ENCODE measurements at regions of chr1 and their contacts with region 1.

Region 1: GRCh38 chr1:153352523-153352922 is 3.9 kb upstream of the PGLYRP4 start:
- DNase-seq: peak; percentile 87
- H3K4me3 Mint-ChIP-seq: no peak overlapping the region
- H3K27ac Mint-ChIP-seq: no peak overlapping the region
- H3K4me1 Mint-ChIP-seq: peaks cover 26% of the 10 kb centered on the region
- H3K27me3 Mint-ChIP-seq: peaks cover 40% of the 10 kb centered on the region
- CTCF ChIP-seq: peak; percentile 99

Region 2: DNA sequence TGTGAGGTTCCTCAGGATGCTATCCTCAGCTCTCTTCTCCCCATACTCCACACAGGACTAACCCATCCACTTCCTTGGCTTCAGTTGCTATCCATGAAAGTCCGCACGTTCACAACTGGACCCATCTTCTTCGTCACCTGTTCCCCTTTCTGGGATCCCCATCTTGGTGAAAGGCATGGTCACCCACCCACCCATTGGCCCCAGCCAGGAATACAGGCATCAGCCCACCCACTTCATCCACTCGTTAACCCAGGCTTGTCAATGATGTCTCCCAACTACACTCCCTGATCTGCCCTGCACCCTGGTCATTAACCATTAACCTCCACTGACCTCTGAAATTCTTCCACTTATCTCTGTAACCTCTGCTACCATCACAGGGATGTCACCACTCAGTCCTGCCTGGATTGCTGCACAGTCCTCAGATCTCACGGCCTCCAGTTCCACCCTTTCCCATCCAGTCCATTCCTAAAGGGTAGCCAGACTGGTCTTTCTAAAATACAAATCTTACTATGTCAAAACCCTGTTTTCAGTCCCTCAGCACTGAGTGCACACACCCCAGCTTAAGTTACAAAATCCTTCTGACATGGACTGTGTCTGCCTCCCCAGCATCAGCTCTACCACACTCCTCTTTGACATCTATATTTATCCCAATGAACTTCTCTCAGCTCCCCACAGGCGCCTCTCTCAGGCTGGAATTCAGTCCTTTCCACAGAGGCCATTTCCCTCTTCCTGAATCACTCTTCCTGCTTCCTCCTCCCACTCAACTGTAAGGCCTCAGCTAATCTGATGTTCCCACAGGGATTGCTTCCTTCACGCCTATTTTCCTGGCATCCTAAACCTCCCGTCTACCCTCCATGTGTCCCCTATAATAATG is 14.3 kb before region 1 on chr1:
- CTCF ChIA-PET with region 1: interaction called, 46 read pairs
- POLR2A ChIA-PET with region 1: interaction called, 5 read pairs
- intact Hi-C with region 1: no loop called
- DNase-seq: no peak
- H3K4me3 Mint-ChIP-seq: no peak overlapping the region
- H3K27ac Mint-ChIP-seq: no peak overlapping the region
- H3K4me1 Mint-ChIP-seq: no peaks in the 10 kb centered on the region
- H3K27me3 Mint-ChIP-seq: peaks cover 73% of the 10 kb centered on the region
- CTCF ChIP-seq: no peak

Region 3: DNA sequence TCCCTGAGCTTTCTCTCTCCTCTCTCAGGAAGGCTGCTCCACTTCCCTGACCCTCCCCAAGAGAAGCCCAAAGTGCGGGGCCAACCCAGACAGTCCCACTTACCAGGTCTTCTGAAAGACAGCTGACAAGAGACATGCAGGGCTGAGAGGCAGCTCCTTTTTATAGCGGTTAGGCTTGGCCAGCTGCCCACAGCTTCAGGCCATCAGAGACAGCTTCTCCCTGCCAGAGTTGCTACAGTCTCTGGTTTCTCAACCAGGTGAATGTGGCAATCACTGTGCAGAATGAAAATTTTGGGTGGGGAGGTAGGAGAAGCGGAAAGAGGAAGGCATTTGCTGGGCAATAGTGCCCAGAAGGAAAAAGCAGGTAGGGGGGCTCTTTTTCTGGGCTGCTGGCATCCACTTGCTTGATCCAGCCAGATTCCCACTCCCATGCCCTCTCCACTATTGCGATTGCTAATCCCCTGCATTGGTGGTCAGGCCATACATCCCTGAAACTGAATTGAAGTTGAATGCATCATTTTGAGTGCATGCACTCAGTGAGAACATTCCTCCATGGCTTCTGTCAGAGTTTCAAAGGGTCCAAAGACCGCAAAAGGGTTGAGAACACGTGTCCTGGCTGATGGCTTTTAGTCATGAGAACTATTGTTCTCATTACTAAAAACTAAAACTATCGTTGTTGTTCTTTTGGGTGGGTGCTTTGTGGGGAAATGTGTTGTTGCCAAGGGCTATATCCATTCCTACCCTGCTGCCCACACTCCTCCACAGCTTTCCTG is 38.6 kb after region 1 on chr1 and contains the start of gene S100A8:
- CTCF ChIA-PET with region 1: interaction called, 92 read pairs
- POLR2A ChIA-PET with region 1: interaction called, 26 read pairs
- intact Hi-C with region 1: no loop called
- DNase-seq: peak; percentile 99
- H3K4me3 Mint-ChIP-seq: peak within 1 kb of the TSS; percentile 66
- H3K27ac Mint-ChIP-seq: peak within 1 kb of the TSS; percentile 2
- H3K4me1 Mint-ChIP-seq: peaks cover 71% of the 10 kb centered on the region
- H3K27me3 Mint-ChIP-seq: no peaks in the 10 kb centered on the region
- CTCF ChIP-seq: no peak
- total RNA-seq, gene S100A8: 46.9 and 80.4 TPM in 2 replicates

Region 4: DNA sequence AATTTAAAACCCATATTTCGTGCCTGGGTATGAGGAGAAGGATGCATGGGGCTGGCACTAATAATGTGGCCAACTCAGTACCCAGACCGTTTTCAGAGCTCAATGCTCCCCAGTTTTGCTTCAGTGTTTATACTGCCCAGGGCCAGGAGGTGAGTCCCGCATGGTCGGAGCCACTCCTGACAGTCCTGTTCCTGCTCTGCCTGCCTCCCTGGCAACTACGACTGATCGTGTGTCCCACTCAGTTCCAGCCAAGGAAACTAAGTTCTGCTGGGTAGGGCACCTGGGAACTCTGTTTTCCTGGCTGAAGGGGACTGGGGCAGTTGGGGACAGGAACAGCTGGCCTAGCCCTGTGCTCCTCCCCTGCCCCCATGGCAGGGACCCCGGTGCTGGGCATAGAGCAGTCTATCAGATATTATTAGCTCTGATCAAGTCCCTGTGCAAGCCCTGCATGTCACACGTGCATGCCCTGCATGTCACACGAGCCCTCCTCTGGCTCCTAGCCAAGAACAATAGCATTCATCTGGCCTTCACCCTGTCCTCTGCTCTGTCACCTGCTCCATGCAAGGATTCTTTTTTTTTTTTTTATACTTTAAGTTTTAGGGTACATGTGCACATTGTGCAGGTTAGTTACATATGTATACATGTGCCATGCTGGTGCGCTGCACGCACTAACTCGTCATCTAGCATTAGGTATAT is 88.9 kb after region 1 on chr1:
- CTCF ChIA-PET with region 1: interaction called, 18 read pairs
- POLR2A ChIA-PET with region 1: interaction called, 3 read pairs
- intact Hi-C with region 1: no loop called
- DNase-seq: no peak
- H3K4me3 Mint-ChIP-seq: no peak overlapping the region
- H3K27ac Mint-ChIP-seq: no peak overlapping the region
- H3K4me1 Mint-ChIP-seq: no peaks in the 10 kb centered on the region
- H3K27me3 Mint-ChIP-seq: peaks cover 61% of the 10 kb centered on the region
- CTCF ChIP-seq: no peak

Region 5: GRCh38 chr1:153510984-153511410 is 158.5 kb after region 1 on chr1:
- CTCF ChIA-PET with region 1: interaction called, 1,438 read pairs
- POLR2A ChIA-PET with region 1: interaction called, 6 read pairs
- intact Hi-C with region 1: no loop called
- DNase-seq: peak; percentile 87
- H3K4me3 Mint-ChIP-seq: no peak overlapping the region
- H3K27ac Mint-ChIP-seq: peak overlapping the region; percentile 73
- H3K4me1 Mint-ChIP-seq: peaks cover 60% of the 10 kb centered on the region
- H3K27me3 Mint-ChIP-seq: no peaks in the 10 kb centered on the region
- CTCF ChIP-seq: peak; percentile 100

Region 6: GRCh38 chr1:153683854-153684253 is 331.3 kb after region 1 on chr1:
- CTCF ChIA-PET with region 1: no interaction called
- POLR2A ChIA-PET with region 1: no interaction called
- intact Hi-C with region 1: no loop called
- DNase-seq: peak; percentile 53
- H3K4me3 Mint-ChIP-seq: no peak overlapping the region
- H3K27ac Mint-ChIP-seq: no peak overlapping the region
- H3K4me1 Mint-ChIP-seq: peaks cover 9% of the 10 kb centered on the region
- H3K27me3 Mint-ChIP-seq: peaks cover 46% of the 10 kb centered on the region
- CTCF ChIP-seq: no peak

Region 7: DNA sequence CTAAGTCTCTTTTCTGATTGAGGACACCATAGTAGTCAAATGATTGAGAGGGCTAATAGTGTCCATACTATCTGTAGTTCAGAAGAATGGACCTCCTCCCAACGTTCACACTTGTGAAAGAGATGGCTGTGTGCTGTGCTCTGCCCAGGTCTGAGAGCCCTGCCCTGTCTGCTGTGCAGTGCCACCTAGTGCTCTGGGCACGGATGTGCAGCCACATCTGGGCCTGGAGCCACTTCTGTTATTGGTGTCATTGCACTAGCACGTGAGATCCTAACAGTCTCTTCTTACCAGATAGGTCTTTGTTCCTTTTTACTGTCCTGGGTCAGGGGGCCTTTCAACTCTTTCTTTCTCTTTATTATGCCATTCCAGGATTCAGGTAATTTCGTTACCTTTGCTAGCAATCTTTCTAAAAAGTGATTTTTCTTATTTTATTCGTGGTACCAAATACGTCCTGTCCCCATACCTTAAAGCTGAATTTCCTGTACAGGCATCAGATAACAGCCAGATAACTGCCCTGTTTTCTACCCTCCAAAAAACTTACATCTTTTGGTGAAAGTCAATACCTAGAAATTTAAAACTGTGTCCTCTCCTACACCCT is 397.0 kb after region 1 on chr1:
- CTCF ChIA-PET with region 1: interaction called, 5 read pairs
- POLR2A ChIA-PET with region 1: no interaction called
- intact Hi-C with region 1: loop called (anchors 2 kb)
- DNase-seq: peak; percentile 89
- H3K4me3 Mint-ChIP-seq: no peak overlapping the region
- H3K27ac Mint-ChIP-seq: no peak overlapping the region
- H3K4me1 Mint-ChIP-seq: peaks cover 5% of the 10 kb centered on the region
- H3K27me3 Mint-ChIP-seq: no peaks in the 10 kb centered on the region
- CTCF ChIP-seq: peak; percentile 98

Measured in MCF 10A (cell line).